ENCODE measurements at regions of chr5 and their contacts with region 1.

Region 1: DNA sequence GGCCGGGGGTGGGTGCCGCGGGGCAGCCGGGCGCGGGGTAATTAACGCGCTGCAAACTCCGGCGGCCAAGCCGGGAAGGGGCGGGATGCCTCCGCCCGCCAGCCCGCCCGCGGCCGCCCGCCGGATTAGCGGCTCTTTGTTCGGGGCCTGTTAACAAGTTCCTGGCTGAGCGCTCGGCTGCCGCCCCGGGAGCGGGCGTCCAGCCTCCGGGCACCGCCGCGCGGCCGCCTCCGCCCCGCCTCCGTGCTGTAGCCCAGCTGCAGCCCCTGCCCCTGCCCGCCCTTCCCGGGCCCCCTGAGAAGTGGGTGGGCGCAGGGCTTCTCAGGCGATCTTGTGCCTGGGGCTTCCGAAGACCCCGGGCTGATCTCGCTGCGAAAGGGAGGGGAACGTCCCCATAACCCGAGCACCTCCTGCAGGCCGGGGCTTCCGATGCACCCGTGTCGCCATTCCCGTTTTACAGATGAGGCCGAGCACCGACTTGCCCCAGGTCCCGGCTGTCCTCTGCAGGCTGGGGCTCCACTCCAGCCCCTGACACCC is 7.5 kb downstream of the UNC5A start:
- DNase-seq: peak; percentile 25

Region 2: GRCh38 chr5:176365610-176366404 is 452.1 kb before region 1 on chr5:
- in situ Hi-C with region 1: no loop called
- DNase-seq: no peak

Region 3: DNA sequence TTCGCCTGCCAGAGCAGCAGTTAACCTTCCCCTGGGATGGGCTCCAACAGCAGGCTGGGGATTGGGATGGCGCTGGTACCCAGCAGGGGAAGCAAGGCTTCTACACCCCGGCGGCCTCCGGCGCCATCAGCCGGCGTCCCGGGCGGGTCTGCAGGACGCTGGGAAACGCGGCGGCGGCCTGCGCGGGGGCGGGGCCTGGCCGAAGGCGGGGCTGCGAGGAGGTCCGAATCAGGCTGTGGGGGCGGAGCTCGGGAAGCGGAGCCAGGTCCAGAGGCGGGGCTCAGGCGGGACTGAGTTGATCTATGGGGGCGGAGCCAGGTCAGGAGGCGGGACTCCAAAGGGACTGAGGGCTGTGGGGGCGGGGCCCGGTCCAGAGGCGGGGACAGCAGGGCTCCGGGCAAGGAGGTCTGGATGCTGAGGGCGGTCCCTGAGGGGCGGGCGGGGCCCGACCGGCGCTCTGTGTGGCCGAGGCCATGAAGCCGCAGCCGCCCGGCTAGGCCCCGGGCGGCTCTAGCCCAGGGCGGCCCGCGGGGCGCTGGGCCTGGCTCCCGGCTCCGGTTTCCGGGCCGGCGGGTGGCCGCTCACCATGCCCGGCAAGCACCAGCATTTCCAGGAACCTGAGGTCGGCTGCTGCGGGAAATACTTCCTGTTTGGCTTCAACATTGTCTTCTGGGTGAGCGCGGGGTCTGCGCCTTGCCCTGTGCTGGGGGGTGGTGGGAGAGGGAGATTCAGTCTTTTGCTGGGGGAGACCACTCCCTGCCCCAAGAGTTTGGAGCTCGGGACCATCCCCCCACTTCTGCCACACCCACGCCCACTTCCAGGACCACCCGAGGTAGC is 170.7 kb before region 1 on chr5 and contains the start of gene TSPAN17:
- in situ Hi-C with region 1: no loop called
- DNase-seq: peak; percentile 98

Region 4: DNA sequence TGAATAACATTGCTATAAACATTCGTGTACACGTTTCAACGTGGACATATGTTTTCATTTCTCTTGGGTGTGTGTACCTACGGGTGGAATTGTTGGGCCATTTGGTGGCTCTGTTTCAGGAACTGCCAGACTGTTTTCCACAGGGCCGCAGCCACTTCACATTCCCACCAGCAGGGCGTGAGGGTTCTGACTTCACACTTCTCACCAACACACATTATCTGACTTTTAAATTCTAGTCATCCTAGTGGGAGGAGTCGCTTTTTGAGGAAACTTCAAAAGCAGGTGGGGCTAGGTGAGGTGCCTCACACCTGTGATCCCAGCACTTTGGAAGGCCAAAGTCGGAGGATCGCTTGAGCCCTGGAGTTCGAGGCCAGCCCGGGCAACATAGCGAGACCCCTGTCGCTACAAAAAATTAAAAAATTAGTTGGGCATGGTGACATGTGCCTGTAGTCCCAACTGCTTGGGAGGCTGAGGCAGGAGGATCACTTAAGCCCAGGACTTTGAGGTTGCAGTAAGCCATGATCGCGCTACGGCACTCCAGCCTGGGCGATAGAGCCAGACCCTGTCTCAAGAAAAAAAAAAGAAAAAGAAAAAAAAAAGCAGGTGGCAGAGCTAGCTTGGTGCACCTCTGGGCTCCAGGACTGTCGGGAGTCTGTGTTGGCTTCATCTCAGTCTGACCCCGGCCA is 142.1 kb before region 1 on chr5:
- in situ Hi-C with region 1: no loop called
- DNase-seq: peak; percentile 31

Region 5: DNA sequence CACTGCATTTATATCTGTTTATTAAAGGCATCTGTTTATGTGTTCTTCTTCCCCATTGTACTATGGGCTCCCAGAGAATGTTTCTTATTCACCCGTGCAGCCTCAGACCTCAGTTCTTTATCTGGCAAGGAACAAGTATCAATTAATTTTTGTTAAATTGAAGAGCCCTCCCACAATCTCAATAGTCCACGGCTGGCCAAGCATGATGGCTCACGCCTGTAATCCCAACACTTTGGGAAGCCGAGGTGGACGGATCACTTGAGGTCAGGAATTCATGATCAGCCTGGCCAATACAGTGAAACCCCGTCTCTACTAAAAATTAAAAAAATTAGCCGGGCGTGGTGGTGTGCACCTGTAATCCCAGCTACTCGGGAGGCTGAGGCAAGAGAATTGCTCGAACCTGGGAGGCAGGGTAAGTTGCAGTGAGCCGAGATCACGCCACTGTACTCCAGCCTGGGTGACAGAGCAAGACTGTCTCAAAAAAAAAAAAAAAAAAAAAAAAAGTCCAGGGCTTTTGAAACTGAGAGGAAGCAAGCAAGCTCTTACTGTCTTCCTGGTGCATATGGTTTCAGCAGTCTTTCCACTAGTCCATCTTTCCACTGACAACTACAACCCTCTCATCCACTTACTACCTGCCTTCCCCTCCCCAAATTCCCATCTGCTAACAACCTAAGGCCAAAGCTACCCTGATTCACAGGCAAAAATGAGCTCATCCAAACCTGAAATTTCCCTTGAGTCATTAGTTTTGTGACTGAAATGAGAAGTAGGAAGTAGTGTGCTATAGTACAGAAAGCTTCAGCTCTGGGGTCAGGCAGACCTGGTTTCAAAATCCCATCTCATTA is 83.6 kb after region 1 on chr5:
- in situ Hi-C with region 1: loop called (anchors 25 kb)
- DNase-seq: peak; percentile 12

Measured in ACHN (cell line).